ENCODE measurements at regions of chr5 and their contacts with region 1.

Region 1: DNA sequence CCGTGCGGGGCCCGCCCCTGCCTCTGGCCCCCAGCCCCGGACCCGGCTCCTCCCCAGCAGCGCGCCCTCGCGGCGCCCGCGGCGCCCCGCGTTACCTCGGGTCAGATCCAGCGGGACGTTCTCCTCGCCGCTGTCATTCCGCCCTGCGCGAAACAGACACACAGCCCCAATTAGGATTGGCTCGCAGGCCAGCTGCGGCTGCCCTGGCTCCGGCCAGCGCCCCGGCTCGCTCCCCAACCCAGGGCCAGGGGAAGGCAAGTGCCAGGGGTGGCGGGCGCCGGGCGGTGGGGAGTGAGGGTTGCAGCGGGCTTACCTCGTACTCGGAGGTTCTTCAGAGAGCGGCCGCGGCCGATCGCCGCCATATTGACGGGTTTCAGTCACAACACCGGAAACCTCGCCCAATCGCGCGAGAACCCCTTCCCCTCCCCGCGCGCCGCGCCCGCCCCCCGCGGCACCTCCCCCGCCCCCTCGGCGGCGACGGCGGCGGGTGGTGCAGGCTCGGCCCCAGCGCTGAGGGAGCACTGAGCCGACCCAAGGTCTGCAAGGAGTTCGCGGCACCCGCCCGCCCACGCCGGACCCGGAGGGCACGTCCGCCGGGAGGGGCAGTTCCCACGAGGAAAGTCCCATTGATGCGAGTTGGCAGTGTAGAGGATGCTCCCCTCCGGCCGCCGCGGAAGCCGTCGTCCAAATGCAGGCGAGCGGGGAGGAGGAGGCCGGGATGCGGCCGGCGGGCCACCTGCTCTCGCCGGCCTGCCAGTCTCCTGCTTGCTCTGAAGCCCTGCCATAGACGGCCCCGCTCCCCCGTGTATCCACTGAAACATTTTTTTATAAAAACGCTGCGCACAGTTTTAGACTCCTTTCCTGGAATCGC is at the start of gene RICTOR:
- DNase-seq: peak; percentile 88 to 95
- H3K4me3 ChIP-seq: peak within 1 kb of the TSS; percentile 99
- H3K27ac ChIP-seq: peak within 1 kb of the TSS; percentile 99 to 100
- H3K4me1 ChIP-seq: peaks cover 0 to 44% (median 18%) of the 10 kb centered on the region in 4 donors
- H3K27me3 ChIP-seq: no peaks in the 10 kb centered on the region
- CTCF ChIP-seq: no peak

Region 2: GRCh38 chr5:39015743-39016586 is 58.3 kb before region 1 on chr5:
- intact Hi-C with region 1: loop called (anchors 5 kb)
- DNase-seq: no peak
- H3K4me3 ChIP-seq: no peak overlapping the region
- H3K27ac ChIP-seq: peak overlapping the region; percentile 62 to 71
- H3K4me1 ChIP-seq: peaks cover 0 to 60% (median 8%) of the 10 kb centered on the region in 4 donors
- H3K27me3 ChIP-seq: no peaks in the 10 kb centered on the region
- CTCF ChIP-seq: no peak

Measured in tibial artery (tissue), 4 donors.